ENCODE measurements at regions of chr1 and their contacts with region 1.

Region 1: DNA sequence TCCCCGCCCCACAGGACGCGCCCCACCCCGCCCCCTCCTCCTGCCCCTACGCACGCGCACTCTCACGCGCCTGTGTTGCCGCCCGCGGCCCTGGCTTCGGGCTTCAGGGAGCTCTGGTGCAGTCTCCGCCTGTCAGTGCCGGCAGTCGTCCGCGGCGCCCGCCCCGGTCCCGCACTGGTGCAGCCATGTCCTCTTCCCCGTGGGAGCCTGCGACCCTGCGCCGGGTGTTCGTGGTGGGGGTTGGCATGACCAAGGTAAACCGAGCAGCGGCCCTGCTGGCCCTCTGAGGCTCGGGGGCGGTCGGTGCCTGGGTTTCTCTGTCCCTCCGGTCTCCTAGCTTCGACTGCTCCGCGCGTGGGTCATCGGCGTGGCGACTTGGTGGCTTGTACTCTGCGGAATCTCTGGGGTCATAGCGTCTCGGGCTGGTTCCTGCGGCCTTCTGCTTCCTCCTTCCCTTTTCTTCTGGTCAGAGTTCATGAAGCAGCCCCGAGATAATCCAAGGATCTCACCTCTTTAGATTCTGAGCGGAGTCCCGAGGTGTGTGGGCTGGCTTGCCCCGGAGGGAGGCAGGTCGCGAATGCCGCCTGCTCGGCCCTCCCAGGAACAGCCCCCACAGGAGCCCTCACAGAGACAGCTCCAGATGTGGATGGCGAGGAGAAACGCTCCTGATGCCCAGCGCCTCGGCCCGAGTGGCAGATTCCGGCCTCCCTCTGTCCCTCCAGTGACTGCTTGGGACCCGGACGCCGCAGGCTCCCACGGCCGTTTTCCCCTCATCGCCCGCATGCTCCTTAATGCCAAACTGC is at the start of gene SCP2:
- DNase-seq: peak; percentile 79
- ATAC-seq: peak; percentile 84
- H3K4me3 ChIP-seq: peak within 1 kb of the TSS; percentile 85
- H3K27ac ChIP-seq: no peak within 1 kb of the TSS
- H3K4me1 ChIP-seq: peaks cover 13% of the 10 kb centered on the region; the same call in 1 of the 2 replicates
- H3K27me3 ChIP-seq: no peaks in the 10 kb centered on the region
- CTCF ChIP-seq: no peak
- total RNA-seq, gene SCP2: 97.5 and 106 TPM in 2 replicates

Region 2: GRCh38 chr1:52825868-52826267 is 101.5 kb before region 1 on chr1:
- CTCF ChIA-PET with region 1: no interaction called
- POLR2A ChIA-PET with region 1: no interaction called
- intact Hi-C with region 1: loop called (anchors 10 kb)
- DNase-seq: peak; percentile 57
- ATAC-seq: peak; percentile 85
- H3K4me3 ChIP-seq: no peak overlapping the region
- H3K27ac ChIP-seq: no peak overlapping the region
- H3K4me1 ChIP-seq: no peaks in the 10 kb centered on the region
- H3K27me3 ChIP-seq: no peaks in the 10 kb centered on the region
- CTCF ChIP-seq: peak; percentile 66

Region 3: GRCh38 chr1:52834798-52835197 is 92.6 kb before region 1 on chr1:
- CTCF ChIA-PET with region 1: interaction called, 10 read pairs
- POLR2A ChIA-PET with region 1: no interaction called
- intact Hi-C with region 1: loop called (anchors 10 kb)
- DNase-seq: no peak
- ATAC-seq: no peak
- H3K4me3 ChIP-seq: no peak overlapping the region
- H3K27ac ChIP-seq: no peak overlapping the region
- H3K4me1 ChIP-seq: peaks cover 7% of the 10 kb centered on the region
- H3K27me3 ChIP-seq: no peaks in the 10 kb centered on the region
- CTCF ChIP-seq: no peak

Region 4: DNA sequence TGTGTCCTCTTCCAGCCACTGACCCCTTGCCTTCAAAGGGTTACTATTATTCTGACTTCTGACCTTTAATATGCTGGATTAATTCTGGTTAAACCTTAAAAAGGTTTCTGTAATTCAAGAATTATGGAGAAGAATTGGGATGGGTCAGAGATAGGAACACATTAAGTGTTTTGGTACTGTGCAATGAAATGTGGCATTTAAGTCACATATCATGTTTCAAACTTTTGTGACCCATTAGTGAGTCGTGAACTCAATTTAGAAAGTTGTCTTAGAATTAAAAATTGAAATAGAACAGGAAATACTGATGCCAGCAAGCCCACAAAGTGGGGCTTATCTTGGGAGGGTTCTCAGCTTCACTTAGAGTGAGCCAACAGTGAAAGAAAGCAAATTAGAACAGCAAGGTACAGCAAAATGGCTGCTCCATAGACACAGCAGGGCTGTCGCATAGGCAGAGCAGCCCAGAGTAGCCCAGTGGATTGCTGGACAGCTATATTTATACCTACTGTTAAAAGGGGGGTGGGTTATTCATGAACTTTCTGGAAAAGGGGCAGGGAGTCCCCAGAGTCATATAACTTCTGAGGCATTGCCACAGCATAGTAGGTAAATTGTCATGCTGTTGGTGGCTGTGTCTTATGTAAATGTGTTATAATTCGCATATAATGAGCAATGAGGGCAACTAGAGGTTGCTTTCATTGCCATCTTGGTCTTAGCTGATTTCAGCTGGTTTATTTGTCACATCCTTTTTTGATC is 10.2 kb after region 1 on chr1:
- CTCF ChIA-PET with region 1: interaction called, 10 read pairs
- POLR2A ChIA-PET with region 1: no interaction called
- intact Hi-C with region 1: no loop called
- DNase-seq: no peak
- ATAC-seq: no peak
- H3K4me3 ChIP-seq: no peak overlapping the region
- H3K27ac ChIP-seq: no peak overlapping the region
- H3K4me1 ChIP-seq: no peaks in the 10 kb centered on the region
- H3K27me3 ChIP-seq: no peaks in the 10 kb centered on the region
- CTCF ChIP-seq: no peak

Region 5: GRCh38 chr1:53107570-53108322 is 180.3 kb after region 1 on chr1:
- CTCF ChIA-PET with region 1: no interaction called
- POLR2A ChIA-PET with region 1: no interaction called
- intact Hi-C with region 1: loop called (anchors 10 kb)
- DNase-seq: peak; percentile 97
- ATAC-seq: peak; percentile 89
- H3K4me3 ChIP-seq: peak overlapping the region; percentile 41; the same call in 1 of the 2 replicates
- H3K27ac ChIP-seq: peak overlapping the region; percentile 96
- H3K4me1 ChIP-seq: peaks cover 59% of the 10 kb centered on the region
- H3K27me3 ChIP-seq: no peaks in the 10 kb centered on the region
- CTCF ChIP-seq: no peak